Heart left ventricle (tissue), 16 donors: ENCODE measurements at regions of chr21 and their contacts with region 1.

Region 1: GRCh38 chr21:16678429-16679160 is 834.2 kb upstream of the CXADR start:
- DNase-seq: no peak
- ATAC-seq: no peak
- H3K4me3 ChIP-seq: no peak overlapping the region
- H3K27ac ChIP-seq: no peak overlapping the region
- H3K4me1 ChIP-seq: peaks cover 0 to 5% (median 0%) of the 10 kb centered on the region in 12 donors
- H3K27me3 ChIP-seq: no peaks in the 10 kb centered on the region
- CTCF ChIP-seq: no peak
- POLR2A ChIP-seq: no peak

Region 2: GRCh38 chr21:16742131-16742641 is 63.6 kb after region 1 on chr21:
- intact Hi-C with region 1: loop called in 1 of 10 experiments (anchors 10 kb)
- DNase-seq: peak in 4 of 5 donors; percentile 19 to 38 (median 32)
- ATAC-seq: peak; percentile 59 to 88 (median 68)
- H3K4me3 ChIP-seq: no peak overlapping the region
- H3K27ac ChIP-seq: peak overlapping the region in 5 of 12 donors; percentile 11 to 53 (median 26)
- H3K4me1 ChIP-seq: peaks cover 0 to 11% (median 0%) of the 10 kb centered on the region in 12 donors
- H3K27me3 ChIP-seq: no peaks in the 10 kb centered on the region
- CTCF ChIP-seq: no peak
- POLR2A ChIP-seq: no peak